ENCODE measurements at regions of chr1 and their contacts with region 1.

Region 1: DNA sequence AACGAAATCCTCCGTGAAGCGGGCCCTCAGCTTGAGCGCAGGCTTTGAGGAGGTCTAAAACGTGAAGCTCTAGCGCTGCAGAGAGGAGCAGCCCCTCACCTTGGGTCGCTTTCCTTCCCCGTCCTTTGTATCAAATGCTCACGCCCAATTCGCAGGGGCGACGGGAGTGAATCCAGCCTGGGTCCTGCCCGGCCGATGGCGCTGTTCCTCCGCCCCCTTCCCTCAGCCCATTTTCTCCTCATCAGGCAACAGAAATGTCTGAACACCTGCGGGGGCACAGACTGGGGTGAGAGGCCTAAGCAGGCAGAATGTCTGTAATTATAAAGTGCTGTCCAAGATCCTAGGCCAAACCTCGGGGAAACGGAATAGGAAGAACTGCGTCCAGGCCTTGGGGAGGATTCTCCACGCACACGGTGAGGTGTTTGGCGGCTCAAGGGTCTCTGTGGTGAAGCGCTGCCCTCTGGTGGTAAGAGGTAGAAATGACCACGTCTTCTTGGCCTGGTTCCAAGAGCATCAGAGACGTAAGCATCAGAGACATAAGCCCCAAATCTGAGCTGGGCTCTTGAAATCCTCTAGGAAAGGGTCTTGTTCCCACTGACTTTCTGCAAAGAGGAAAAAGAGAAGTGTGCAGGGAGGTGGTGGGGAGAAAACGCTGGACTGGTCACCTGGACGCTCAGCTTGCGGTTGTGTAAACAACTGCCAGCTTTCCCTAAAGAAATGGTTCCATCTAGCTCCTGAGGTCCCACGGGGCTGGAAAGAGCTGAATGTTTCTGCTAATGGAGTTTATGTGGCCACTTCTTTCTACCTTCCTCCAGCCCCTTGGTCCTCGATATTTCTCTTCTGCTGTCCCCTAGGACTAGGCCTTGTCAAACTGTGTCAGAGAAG is 92.1 kb upstream of the CD53 start:
- DNase-seq: peak; percentile 50 to 92
- ATAC-seq: peak; percentile 76 to 85 (median 78)
- H3K4me3 ChIP-seq: no peak overlapping the region
- H3K4me3 Mint-ChIP-seq: no peak overlapping the region
- H3K27ac ChIP-seq: no peak overlapping the region
- H3K27ac Mint-ChIP-seq: no peak overlapping the region
- H3K4me1 ChIP-seq: peaks cover 11% of the 10 kb centered on the region
- H3K4me1 Mint-ChIP-seq: peaks cover 10 to 13% of the 10 kb centered on the region in 2 donors
- H3K27me3 ChIP-seq: no peaks in the 10 kb centered on the region
- H3K27me3 Mint-ChIP-seq: peaks cover 10 to 23% of the 10 kb centered on the region in 2 donors
- CTCF ChIP-seq: peak; percentile 65

Region 2: GRCh38 chr1:110524311-110525251 is 256.3 kb before region 1 on chr1:
- intact Hi-C with region 1: loop called (anchors 1 kb)
- DNase-seq: peak in 1 of 2 donors; percentile 74
- ATAC-seq: peak in 2 of 3 donors; percentile 50 to 71
- H3K4me3 ChIP-seq: no peak overlapping the region
- H3K4me3 Mint-ChIP-seq: no peak overlapping the region
- H3K27ac ChIP-seq: no peak overlapping the region
- H3K27ac Mint-ChIP-seq: no peak overlapping the region
- H3K4me1 ChIP-seq: peaks cover 5% of the 10 kb centered on the region
- H3K4me1 Mint-ChIP-seq: no peaks in the 10 kb centered on the region
- H3K27me3 ChIP-seq: peaks cover 2% of the 10 kb centered on the region
- H3K27me3 Mint-ChIP-seq: peaks cover 18 to 39% of the 10 kb centered on the region in 2 donors
- CTCF ChIP-seq: peak; percentile 40

Region 3: GRCh38 chr1:110554871-110555801 is 225.7 kb before region 1 on chr1:
- intact Hi-C with region 1: loop called (anchors 5 kb)
- DNase-seq: peak; percentile 27 to 76
- ATAC-seq: peak; percentile 67 to 94 (median 73)
- H3K4me3 ChIP-seq: no peak overlapping the region
- H3K4me3 Mint-ChIP-seq: peak overlapping the region; percentile 41
- H3K27ac ChIP-seq: no peak overlapping the region
- H3K27ac Mint-ChIP-seq: no peak overlapping the region
- H3K4me1 ChIP-seq: peaks cover 4% of the 10 kb centered on the region
- H3K4me1 Mint-ChIP-seq: peaks cover 3 to 5% of the 10 kb centered on the region in 2 donors
- H3K27me3 ChIP-seq: peaks cover 16% of the 10 kb centered on the region
- H3K27me3 Mint-ChIP-seq: peaks cover 43 to 54% of the 10 kb centered on the region in 2 donors
- CTCF ChIP-seq: peak; percentile 50

Region 4: DNA sequence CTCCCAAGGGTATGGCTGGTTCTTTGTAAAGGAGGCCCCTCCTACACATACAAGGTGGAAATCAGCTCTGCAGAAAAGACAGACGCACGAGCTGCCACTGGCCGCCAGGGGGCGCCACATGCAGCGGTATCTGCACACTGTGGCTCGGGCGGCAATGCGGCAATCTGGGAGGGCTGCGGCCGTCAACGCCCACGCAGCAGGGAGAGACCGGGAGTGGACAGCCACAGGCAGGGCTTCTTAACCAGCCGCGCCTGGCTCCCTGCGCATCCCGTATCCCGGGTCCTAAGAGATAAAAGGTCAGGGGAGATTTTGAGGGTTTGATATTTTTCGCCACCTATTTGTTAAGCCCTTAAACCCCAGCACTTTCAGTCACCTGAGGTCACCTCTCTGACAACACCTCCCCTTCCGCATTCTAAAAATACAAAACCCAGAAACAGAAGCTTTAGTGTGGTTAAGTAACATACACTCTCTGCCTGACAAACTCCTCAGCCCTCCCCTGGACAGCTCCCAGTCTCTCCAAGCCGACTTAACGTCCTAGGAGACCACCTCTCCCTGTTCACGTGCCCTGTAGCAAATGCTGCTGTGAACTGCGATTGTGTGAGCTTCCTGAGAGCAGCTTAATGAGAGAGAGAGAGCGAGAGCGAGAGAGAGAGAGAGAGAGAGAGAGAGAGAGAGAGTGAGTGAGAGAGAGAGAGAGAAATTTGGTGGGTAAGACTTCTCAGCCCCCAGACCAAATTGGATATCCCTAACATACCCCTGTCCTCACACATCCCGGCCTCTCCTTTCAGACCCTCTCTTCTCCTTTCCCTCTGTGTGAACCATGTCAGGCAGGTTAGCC is 161.2 kb before region 1 on chr1:
- intact Hi-C with region 1: loop called (anchors 1 kb)
- DNase-seq: peak; percentile 87 to 95
- ATAC-seq: peak; percentile 83 to 88 (median 86)
- H3K4me3 ChIP-seq: peak overlapping the region; percentile 55
- H3K4me3 Mint-ChIP-seq: peak overlapping the region; percentile 82
- H3K27ac ChIP-seq: peak overlapping the region; percentile 54
- H3K27ac Mint-ChIP-seq: peak overlapping the region; percentile 69 to 83
- H3K4me1 ChIP-seq: peaks cover 32% of the 10 kb centered on the region
- H3K4me1 Mint-ChIP-seq: peaks cover 22 to 27% of the 10 kb centered on the region in 2 donors
- H3K27me3 ChIP-seq: peaks cover 5% of the 10 kb centered on the region
- H3K27me3 Mint-ChIP-seq: peaks cover 28 to 33% of the 10 kb centered on the region in 2 donors
- CTCF ChIP-seq: peak; percentile 97

Region 5: DNA sequence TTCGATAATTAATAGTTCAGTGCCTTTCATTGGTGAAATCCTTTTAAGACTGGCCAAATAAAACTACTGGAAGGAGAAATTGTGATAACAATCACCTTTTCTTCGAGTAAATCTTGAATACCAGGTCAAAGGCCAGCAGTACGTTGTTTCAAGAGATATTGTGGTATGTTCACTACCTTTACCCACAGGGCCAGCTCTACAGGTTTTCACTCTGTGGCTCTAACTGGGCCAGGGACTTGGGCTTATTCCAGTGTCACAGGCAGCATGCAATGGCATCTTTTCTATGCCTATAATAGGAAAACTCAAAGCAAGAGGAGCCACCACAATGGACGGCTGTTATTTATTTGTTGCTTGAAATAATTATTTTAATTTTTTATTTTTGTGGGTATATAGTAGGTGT is 209.7 kb after region 1 on chr1:
- intact Hi-C with region 1: loop called (anchors 5 kb)
- DNase-seq: no peak
- ATAC-seq: no peak
- H3K4me3 ChIP-seq: no peak overlapping the region
- H3K4me3 Mint-ChIP-seq: no peak overlapping the region
- H3K27ac ChIP-seq: no peak overlapping the region
- H3K27ac Mint-ChIP-seq: no peak overlapping the region
- H3K4me1 ChIP-seq: no peaks in the 10 kb centered on the region
- H3K4me1 Mint-ChIP-seq: peaks cover 6 to 10% of the 10 kb centered on the region in 2 donors
- H3K27me3 ChIP-seq: no peaks in the 10 kb centered on the region
- H3K27me3 Mint-ChIP-seq: peaks cover 24 to 50% of the 10 kb centered on the region in 2 donors
- CTCF ChIP-seq: no peak

Region 6: DNA sequence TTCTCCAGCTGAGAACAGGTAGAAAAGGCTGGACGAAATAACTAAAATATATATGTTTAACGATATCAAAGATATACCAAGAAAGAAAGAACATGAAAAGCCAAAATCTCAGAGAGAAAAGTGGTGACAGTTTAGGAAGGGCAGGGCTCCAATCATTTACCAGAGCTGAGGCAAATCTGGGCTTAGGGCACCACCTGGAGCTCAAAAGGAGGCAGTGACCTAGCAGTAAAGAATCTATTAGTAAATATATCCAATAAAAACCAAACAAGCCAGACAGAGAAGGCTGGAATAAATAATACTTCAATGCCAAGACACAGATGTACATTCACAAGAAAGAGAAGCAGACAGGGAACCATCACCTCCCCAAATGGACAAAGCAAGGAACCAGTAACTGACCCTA is 553.3 kb after region 1 on chr1:
- intact Hi-C with region 1: loop called (anchors 5 kb)
- DNase-seq: peak in 1 of 2 donors; percentile 85
- ATAC-seq: peak in 2 of 3 donors; percentile 82 to 86
- H3K4me3 ChIP-seq: no peak overlapping the region
- H3K4me3 Mint-ChIP-seq: no peak overlapping the region
- H3K27ac ChIP-seq: no peak overlapping the region
- H3K27ac Mint-ChIP-seq: no peak overlapping the region
- H3K4me1 ChIP-seq: no peaks in the 10 kb centered on the region
- H3K4me1 Mint-ChIP-seq: peaks cover 0 to 5% of the 10 kb centered on the region in 2 donors
- H3K27me3 ChIP-seq: no peaks in the 10 kb centered on the region
- H3K27me3 Mint-ChIP-seq: peaks cover 0 to 11% of the 10 kb centered on the region in 2 donors
- CTCF ChIP-seq: peak; percentile 74